ENCODE measurements at regions of chr2 and their contacts with region 1.

Region 1: GRCh38 chr2:229921892-229922445 is at the start of gene TRIP12:
- DNase-seq: peak; percentile 95
- ATAC-seq: peak; percentile 91
- total RNA-seq, gene TRIP12: 166 to 200 TPM

Region 2: DNA sequence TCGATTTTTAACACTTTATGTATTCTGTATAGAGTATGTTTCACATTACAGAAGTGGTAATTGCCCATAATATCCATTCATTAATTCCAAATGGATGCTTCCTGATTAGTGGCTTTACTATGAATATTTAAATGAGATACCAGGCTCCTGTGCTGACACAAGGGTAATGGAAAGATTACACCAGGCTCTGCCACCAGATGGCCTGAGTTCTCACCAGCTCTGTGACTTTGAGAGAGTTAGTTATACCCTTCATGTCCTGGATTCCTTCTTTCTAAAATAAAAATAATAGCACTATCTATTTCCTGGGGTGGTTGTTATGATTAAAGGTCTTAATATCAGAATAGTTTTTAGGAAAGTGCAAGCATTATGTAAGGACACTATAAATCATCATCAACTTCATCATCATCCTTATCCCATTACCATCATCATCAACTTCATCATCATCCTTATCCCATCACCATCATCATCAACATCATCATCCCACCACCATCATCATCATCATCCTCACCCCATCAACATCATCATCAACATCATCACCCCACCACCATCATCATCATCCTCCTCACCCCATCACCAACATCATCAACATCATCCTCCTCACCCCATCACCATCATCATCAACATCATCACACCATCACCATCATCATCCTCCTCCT is 359.4 kb before region 1 on chr2:
- intact Hi-C with region 1: no loop called
- DNase-seq: no peak
- ATAC-seq: no peak

Region 3: DNA sequence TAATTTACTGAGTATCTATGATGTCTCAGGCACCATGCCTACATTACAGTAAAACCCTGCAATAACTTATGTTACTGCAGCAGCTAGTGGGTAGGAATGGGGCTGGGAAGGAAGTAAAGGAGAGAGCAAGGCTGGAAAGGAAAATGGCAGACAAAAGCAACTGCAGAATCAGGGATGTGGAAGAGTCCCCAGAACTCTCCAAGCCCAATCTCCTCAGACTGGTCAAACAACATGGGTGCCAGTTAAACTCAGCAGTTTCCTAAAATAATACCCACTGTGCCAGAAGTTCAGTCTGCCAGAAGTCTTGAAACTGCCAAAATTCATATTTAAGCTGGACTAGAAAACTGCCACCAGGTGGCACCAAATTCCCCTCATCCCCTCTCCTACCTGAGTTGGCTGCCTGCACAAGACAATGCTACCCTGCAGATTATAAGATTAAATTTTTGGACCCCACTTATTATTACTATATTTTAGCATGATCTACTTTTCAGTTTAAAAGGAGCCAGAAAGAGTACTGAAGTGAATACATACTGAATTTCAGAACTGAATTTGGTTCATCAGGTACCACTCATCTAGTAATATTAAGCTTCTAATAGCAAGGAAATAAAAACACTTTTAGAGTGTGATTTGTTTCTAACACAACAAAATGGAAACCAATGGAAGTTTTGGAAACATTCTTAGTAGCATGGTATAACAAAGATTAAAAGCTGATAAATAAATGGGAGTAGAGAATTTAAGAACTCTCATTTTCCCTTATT is 120.8 kb before region 1 on chr2:
- intact Hi-C with region 1: loop called (anchors 5 to 10 kb)
- DNase-seq: peak; percentile 49
- ATAC-seq: peak; percentile 61 to 87

Region 4: GRCh38 chr2:230153390-230153976 is 231.5 kb after region 1 on chr2:
- intact Hi-C with region 1: no loop called
- DNase-seq: no peak
- ATAC-seq: no peak